Activated CD4-positive, alpha-beta T cell treated with anti-CD3 and anti-CD28 coated beads, Interleukin-2, amount 10 ng/mL, durations not matched to agents 24 days and 14 days (primary cell): ENCODE measurements at regions of chr6 and their contacts with region 1.

Region 1: GRCh38 chr6:149082286-149082707 is 235.2 kb upstream of the TAB2 start:
- DNase-seq: peak; percentile 96
- H3K4me3 Mint-ChIP-seq: peak overlapping the region; percentile 69
- H3K27ac Mint-ChIP-seq: peak overlapping the region; percentile 92
- H3K4me1 Mint-ChIP-seq: peaks cover 76% of the 10 kb centered on the region
- H3K27me3 Mint-ChIP-seq: no peaks in the 10 kb centered on the region

Region 2: DNA sequence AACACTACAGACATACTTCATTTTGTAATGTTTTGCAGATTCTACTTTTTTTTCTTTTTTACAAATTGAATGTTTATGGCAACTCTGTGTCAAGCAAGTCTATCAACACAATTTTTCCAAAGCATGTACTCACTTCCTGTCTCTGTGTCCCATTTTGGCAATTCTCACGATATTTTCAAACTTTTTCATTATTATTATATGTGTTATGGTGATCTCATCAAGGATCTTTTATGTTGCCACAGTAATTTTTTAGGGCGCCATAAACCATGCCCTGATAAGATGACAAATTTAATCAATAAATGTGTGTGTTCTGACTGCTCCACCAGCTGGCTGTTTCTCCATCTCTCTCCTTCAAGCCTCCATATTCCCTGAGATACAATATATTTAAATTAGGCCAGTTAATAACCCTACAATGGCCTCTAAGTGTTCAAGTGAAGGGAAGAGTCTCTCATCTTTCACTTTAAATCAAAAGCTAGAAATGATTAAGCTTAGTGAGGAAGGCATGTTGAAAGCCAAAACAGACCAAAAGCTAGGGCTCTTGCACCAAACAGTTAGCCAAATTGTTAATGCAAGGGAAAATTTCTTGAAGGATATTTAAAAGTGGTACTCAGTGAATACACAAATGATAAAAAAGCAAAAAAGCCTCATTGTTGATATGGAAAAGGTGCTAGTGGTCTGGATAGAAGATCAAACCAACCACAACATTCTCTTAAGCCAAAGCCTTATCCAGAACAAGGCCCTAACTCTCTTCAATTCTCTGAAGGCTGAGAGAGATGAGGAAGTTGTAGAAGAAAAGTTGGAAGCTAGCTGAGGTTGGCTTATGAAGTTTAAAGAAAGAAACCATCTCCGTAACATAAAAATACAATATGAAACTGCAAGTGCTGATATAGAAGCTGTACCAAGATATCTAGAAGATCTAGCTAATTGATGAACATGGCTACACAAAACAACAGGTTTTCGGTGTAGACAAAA is 40.8 kb after region 1 on chr6:
- intact Hi-C with region 1: loop called (anchors 2 kb)
- DNase-seq: peak; percentile 56
- H3K4me3 Mint-ChIP-seq: peak overlapping the region; percentile 43
- H3K27ac Mint-ChIP-seq: peak overlapping the region; percentile 83
- H3K4me1 Mint-ChIP-seq: peaks cover 66% of the 10 kb centered on the region
- H3K27me3 Mint-ChIP-seq: no peaks in the 10 kb centered on the region

Region 3: DNA sequence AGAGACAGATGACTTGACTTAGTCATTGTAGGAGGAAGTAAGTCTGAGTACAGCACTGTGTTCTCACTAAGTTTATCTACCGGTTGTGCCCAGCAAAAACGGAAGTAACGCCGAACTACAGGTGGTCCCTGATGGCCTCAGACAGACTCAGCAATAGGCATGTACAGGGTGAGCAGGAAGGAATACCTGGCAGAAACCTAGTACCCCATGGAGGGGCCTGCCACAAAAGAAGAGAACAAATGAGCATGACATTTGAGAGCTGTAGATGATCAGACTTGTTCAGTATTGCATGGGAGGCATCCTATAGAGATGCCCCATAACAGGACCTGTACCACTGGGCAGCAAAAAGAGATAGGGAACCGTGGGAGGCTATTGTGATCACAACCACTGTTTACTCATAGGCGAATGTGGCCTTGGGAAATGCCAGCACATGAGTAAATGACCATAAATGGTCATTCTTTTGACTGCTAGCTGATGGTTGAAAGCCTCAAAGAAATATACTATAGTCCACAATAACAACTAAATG is 128.8 kb after region 1 on chr6:
- intact Hi-C with region 1: loop called (anchors 1 kb)
- DNase-seq: peak; percentile 74
- H3K4me3 Mint-ChIP-seq: no peak overlapping the region
- H3K27ac Mint-ChIP-seq: no peak overlapping the region
- H3K4me1 Mint-ChIP-seq: peaks cover 29% of the 10 kb centered on the region
- H3K27me3 Mint-ChIP-seq: no peaks in the 10 kb centered on the region

Region 4: GRCh38 chr6:149499066-149499465 is 416.8 kb after region 1 on chr6:
- intact Hi-C with region 1: loop called (anchors 5 kb)
- DNase-seq: peak; percentile 38
- H3K4me3 Mint-ChIP-seq: no peak overlapping the region
- H3K27ac Mint-ChIP-seq: peak overlapping the region; percentile 48
- H3K4me1 Mint-ChIP-seq: peaks cover 63% of the 10 kb centered on the region
- H3K27me3 Mint-ChIP-seq: no peaks in the 10 kb centered on the region